ENCODE measurements at regions of chr16 and their contacts with region 1.

Region 1: GRCh38 chr16:58541711-58542110 is 26.4 kb downstream of the SETD6 start:
- DNase-seq: no peak
- H3K4me3 ChIP-seq: no peak overlapping the region
- H3K4me3 Mint-ChIP-seq: no peak overlapping the region
- H3K27ac ChIP-seq: peak overlapping the region in 1 of 2 donors; percentile 12
- H3K27ac Mint-ChIP-seq: no peak overlapping the region
- H3K4me1 ChIP-seq: no peaks in the 10 kb centered on the region
- H3K4me1 Mint-ChIP-seq: no peaks in the 10 kb centered on the region
- H3K27me3 ChIP-seq: no peaks in the 10 kb centered on the region
- H3K27me3 Mint-ChIP-seq: no peaks in the 10 kb centered on the region
- CTCF ChIP-seq: no peak

Region 2: GRCh38 chr16:58563235-58563634 is 21.5 kb after region 1 on chr16:
- intact Hi-C with region 1: no loop called
- DNase-seq: no peak
- H3K4me3 ChIP-seq: no peak overlapping the region
- H3K4me3 Mint-ChIP-seq: no peak overlapping the region
- H3K27ac ChIP-seq: no peak overlapping the region
- H3K27ac Mint-ChIP-seq: no peak overlapping the region
- H3K4me1 ChIP-seq: no peaks in the 10 kb centered on the region
- H3K4me1 Mint-ChIP-seq: no peaks in the 10 kb centered on the region
- H3K27me3 ChIP-seq: no peaks in the 10 kb centered on the region
- H3K27me3 Mint-ChIP-seq: no peaks in the 10 kb centered on the region
- CTCF ChIP-seq: no peak

Region 3: DNA sequence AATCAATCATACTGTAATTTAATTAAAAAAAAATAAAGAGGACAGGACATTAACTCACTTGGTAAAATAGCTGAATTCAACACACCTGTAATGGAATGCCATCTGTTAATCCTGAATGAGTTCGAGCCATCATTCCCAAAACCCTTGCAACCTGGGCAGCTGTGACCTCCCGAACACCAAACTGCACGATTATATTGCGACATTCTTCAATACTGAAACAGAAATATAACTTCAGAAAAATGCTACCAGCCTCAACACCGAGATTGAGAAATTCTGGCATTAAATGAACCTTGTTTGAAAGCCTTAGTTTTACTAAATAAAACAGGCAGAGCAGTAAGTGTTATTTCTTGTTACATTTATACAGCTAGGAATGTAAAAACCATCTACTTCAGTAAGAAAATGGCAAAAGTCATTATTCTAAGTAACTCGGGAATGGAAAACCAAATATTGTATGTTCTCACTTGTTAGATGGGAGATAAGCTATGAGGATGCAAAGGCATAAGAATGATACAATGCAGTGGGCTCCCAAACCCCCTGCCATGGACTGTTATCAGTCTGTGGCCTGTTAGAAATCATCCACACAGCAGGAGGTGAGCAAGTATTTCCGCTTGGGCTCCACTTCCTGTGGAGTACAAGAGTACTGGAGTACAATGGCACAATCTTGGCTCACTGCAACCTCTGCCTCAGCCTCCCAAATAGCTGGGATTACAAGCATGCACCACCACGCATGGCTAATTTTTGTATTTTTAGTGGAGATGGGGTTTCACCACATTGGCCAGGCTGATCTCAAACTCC is 41.5 kb after region 1 on chr16:
- intact Hi-C with region 1: loop called (anchors 5 kb)
- DNase-seq: no peak
- H3K4me3 ChIP-seq: no peak overlapping the region
- H3K4me3 Mint-ChIP-seq: no peak overlapping the region
- H3K27ac ChIP-seq: no peak overlapping the region
- H3K27ac Mint-ChIP-seq: peak overlapping the region in 1 of 7 donors; percentile 69
- H3K4me1 ChIP-seq: no peaks in the 10 kb centered on the region
- H3K4me1 Mint-ChIP-seq: no peaks in the 10 kb centered on the region
- H3K27me3 ChIP-seq: no peaks in the 10 kb centered on the region
- H3K27me3 Mint-ChIP-seq: no peaks in the 10 kb centered on the region
- CTCF ChIP-seq: no peak